Activated CD4-positive, alpha-beta T cell treated with anti-CD3 and anti-CD28 coated beads, Interleukin-2, amount 10 ng/mL, durations not matched to agents 24 days and 14 days (primary cell): ENCODE measurements at regions of chr2 and their contacts with region 1.

Region 1: DNA sequence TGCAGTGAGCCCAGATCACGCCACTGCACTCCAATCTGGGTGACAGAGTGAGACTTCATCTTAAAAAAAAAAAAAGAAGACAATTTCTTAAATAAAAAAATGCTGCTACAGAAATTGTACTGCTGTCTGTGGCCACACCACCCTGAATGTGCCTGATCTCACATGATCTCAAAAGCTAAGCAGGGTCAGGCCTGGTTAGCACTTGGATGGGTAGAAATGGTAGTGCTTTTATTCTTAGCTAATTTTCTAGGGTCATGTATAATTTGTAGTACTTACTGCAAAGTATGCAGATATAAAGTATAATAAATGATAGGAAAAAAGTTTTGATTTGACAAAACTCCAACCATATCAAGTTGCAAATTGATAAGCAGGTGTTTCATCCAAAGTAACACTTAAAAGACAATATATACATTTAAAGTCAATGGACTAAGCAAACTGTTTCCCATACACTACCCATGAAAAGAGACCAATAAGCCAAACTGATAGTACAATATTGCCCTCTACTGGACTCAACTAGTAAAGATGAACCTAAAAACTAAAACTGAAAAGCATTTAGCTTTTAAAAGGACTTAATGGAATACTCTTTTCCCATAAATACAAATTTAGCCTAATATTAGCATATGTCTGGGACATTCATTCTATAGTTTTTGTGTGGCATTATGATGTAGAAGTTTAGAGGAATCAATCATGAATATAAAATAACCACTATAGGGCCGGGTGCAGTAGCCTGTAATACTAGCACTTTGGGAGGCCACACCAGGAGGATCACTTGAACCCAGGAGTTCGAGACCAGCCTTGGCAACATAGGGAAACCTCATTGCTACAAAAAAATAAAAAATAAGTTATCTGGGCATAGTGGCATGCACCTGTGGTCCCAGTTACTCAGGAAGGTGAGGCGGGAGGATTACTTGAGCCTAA is 18.6 kb upstream of the PEX13 start:
- DNase-seq: no peak
- H3K4me3 Mint-ChIP-seq: no peak overlapping the region
- H3K27ac Mint-ChIP-seq: no peak overlapping the region
- H3K4me1 Mint-ChIP-seq: no peaks in the 10 kb centered on the region
- H3K27me3 Mint-ChIP-seq: no peaks in the 10 kb centered on the region

Region 2: DNA sequence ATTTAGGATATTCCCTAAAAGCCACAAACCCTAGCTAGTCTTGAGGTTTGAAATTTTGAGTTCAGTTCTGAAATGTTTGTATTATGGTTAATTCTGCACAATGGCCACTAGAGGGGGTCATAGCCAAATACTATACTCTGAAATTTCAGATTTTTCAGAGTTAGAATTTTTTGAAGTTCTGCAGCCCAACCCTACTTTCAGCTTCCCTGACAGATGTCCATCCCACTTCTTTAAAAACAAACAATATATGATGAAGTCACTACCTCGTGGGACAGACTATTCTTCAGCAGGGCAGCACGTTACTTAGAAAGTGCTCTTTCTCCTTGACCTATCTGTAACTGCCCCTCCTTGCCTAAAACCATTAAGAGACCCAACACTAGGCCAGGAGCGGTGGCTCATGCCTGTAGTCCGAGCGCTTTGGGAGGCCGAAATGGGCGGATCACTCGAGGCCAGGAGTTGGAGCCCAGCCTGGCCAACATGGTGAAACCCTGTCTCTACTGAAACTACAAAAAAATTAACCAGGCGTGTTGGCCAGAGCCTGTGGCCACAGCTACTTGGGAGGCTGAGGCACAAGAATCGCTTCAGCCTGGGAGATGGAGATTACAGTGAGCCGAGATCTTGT is 291.0 kb before region 1 on chr2:
- intact Hi-C with region 1: loop called (anchors 1 kb)
- DNase-seq: peak; percentile 65
- H3K4me3 Mint-ChIP-seq: no peak overlapping the region
- H3K27ac Mint-ChIP-seq: no peak overlapping the region
- H3K4me1 Mint-ChIP-seq: no peaks in the 10 kb centered on the region
- H3K27me3 Mint-ChIP-seq: peaks cover 3% of the 10 kb centered on the region

Region 3: GRCh38 chr2:60794277-60794863 is 204.5 kb before region 1 on chr2:
- intact Hi-C with region 1: loop called (anchors 1 kb)
- DNase-seq: no peak
- H3K4me3 Mint-ChIP-seq: no peak overlapping the region
- H3K27ac Mint-ChIP-seq: no peak overlapping the region
- H3K4me1 Mint-ChIP-seq: peaks cover 19% of the 10 kb centered on the region
- H3K27me3 Mint-ChIP-seq: no peaks in the 10 kb centered on the region

Region 4: GRCh38 chr2:60840880-60841279 is 158.0 kb before region 1 on chr2:
- intact Hi-C with region 1: no loop called
- DNase-seq: no peak
- H3K4me3 Mint-ChIP-seq: no peak overlapping the region
- H3K27ac Mint-ChIP-seq: peak overlapping the region; percentile 14
- H3K4me1 Mint-ChIP-seq: peaks cover 21% of the 10 kb centered on the region
- H3K27me3 Mint-ChIP-seq: no peaks in the 10 kb centered on the region

Region 5: DNA sequence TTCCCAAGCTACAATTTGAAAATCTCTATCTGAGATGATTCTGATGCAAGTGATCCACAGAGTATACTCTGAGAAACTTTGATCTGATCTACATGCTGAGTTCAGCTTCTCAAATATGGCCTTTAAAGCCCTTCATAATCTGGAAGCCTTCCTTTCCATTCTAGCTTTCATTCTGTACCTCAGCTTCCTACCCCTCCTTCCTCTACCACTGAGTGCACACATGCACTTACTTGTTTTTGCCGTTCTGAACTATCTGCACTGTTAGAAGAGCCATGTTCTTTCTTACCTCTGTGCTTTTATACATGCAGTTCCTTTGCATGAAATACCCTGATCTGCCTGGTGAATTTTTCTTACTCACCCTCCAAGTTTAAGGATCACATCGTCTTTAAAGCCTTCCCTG is 92.5 kb before region 1 on chr2:
- intact Hi-C with region 1: loop called (anchors 5 kb)
- DNase-seq: no peak
- H3K4me3 Mint-ChIP-seq: no peak overlapping the region
- H3K27ac Mint-ChIP-seq: peak overlapping the region; percentile 19
- H3K4me1 Mint-ChIP-seq: peaks cover 19% of the 10 kb centered on the region
- H3K27me3 Mint-ChIP-seq: no peaks in the 10 kb centered on the region

Region 6: GRCh38 chr2:60976875-60977561 is 21.9 kb before region 1 on chr2:
- intact Hi-C with region 1: no loop called
- DNase-seq: no peak
- H3K4me3 Mint-ChIP-seq: no peak overlapping the region
- H3K27ac Mint-ChIP-seq: peak overlapping the region; percentile 46
- H3K4me1 Mint-ChIP-seq: peaks cover 30% of the 10 kb centered on the region
- H3K27me3 Mint-ChIP-seq: no peaks in the 10 kb centered on the region

Region 7: GRCh38 chr2:61016808-61017555 is 18.1 kb after region 1 on chr2:
- intact Hi-C with region 1: no loop called
- DNase-seq: peak; percentile 92
- H3K4me3 Mint-ChIP-seq: peak overlapping the region; percentile 99
- H3K27ac Mint-ChIP-seq: peak overlapping the region; percentile 99
- H3K4me1 Mint-ChIP-seq: peaks cover 32% of the 10 kb centered on the region
- H3K27me3 Mint-ChIP-seq: no peaks in the 10 kb centered on the region